Uterus (tissue), 4 donors: ENCODE measurements at regions of chr6 and their contacts with region 1.

Region 1: GRCh38 chr6:170529839-170530469 is 23.2 kb downstream of the PSMB1 start:
- DNase-seq: peak; percentile 74
- H3K4me3 ChIP-seq: no peak overlapping the region
- H3K27ac ChIP-seq: no peak overlapping the region
- H3K4me1 ChIP-seq: no peaks in the 10 kb centered on the region
- H3K27me3 ChIP-seq: no peaks in the 10 kb centered on the region
- CTCF ChIP-seq: peak; percentile 75 to 89 (median 76)
- POLR2A ChIP-seq: no peak

Region 2: DNA sequence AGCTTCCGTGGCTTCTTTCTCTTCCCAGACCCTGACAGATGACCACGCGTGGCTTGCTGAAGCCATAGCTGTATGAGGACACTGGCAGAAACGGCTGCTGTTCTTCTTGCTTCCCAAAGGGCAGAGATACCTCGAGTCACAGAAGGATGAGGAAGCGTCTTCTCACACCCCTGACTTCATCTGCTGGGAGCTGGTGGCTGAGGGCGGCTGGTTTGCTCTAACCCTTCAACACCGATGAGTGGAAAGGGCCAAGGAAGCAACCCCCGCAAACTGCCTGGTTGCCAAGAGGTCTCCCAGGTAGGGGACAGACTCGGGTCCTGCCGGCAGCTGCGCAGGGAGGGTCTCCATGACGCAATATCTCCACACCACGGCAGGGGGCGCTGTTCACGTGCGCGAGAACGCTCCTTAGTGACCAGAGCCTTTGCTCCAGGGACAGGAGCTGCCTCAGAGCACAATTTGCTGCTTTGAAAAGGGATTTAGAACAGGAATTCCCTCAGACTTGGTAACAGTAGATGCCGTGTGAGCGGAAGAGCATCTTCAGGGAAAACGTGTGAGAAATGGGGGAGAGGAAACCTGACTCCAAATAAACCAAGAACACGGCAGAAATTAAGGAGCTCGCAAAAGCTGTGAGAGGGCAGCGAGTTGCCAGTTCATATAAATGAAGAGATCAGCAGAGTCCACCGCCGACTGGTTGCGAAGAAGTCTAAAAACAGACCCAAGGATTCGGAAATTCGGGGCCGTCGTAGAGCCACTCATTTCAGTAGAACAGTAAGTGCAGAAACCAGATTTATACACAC is 698.3 kb before region 1 on chr6:
- intact Hi-C with region 1: loop called (anchors 10 kb)
- DNase-seq: peak; percentile 68 to 73
- H3K4me3 ChIP-seq: no peak overlapping the region
- H3K27ac ChIP-seq: no peak overlapping the region
- H3K4me1 ChIP-seq: no peaks in the 10 kb centered on the region
- H3K27me3 ChIP-seq: no peaks in the 10 kb centered on the region
- CTCF ChIP-seq: peak; percentile 86 to 95 (median 93)
- POLR2A ChIP-seq: no peak

Region 3: GRCh38 chr6:170416303-170416702 is 113.7 kb before region 1 on chr6:
- intact Hi-C with region 1: no loop called
- DNase-seq: no peak
- H3K4me3 ChIP-seq: no peak overlapping the region
- H3K27ac ChIP-seq: no peak overlapping the region
- H3K4me1 ChIP-seq: no peaks in the 10 kb centered on the region
- H3K27me3 ChIP-seq: no peaks in the 10 kb centered on the region
- CTCF ChIP-seq: no peak
- POLR2A ChIP-seq: no peak